ENCODE measurements at regions of chr4 and their contacts with region 1.

Region 1: GRCh38 chr4:67714248-67714583 is 13.3 kb upstream of the UBA6 start:
- DNase-seq: no peak

Region 2: DNA sequence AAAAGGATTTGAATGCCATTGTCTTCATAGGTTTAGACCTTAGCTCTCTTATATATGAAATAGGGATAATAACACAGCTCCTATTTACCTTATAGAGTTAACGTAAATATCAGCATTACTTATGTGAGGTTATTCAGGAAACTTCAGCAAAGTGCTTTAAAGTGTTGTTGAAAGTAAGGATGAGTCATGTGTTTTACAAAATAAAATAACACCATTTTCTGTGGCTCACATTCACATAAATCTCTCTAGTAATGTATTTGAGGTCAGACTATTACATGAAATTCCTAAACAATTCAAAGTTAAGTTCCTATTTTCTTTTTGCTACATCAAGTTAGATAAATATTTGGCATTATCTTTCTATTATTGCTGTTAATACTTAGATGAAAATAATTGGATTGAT is 37.0 kb after region 1 on chr4:
- intact Hi-C with region 1: loop called in 1 of 2 experiments (anchors 1 kb)
- DNase-seq: no peak

Region 3: GRCh38 chr4:67762086-67762485 is 47.9 kb after region 1 on chr4:
- intact Hi-C with region 1: no loop called
- DNase-seq: no peak